Sigmoid colon (tissue), 7 donors: ENCODE measurements at regions of chr6 and their contacts with region 1.

Region 1: GRCh38 chr6:81752138-81752920 is at the start of gene TENT5A:
- DNase-seq: peak; percentile 98
- H3K4me3 ChIP-seq: peak within 1 kb of the TSS; percentile 81 to 94 (median 90)
- H3K27ac ChIP-seq: peak within 1 kb of the TSS; percentile 96 to 98 (median 98)
- H3K4me1 ChIP-seq: peaks cover 0 to 31% (median 22%) of the 10 kb centered on the region in 4 donors
- H3K27me3 ChIP-seq: no peaks in the 10 kb centered on the region
- CTCF ChIP-seq: no peak
- EP300 ChIP-seq: no peak
- POLR2A ChIP-seq: peak; percentile 78 to 93
- total RNA-seq, gene TENT5A: 13.4 to 29.3 (median 23.6) TPM

Region 2: GRCh38 chr6:80133020-80133419 is 1619.3 kb before region 1 on chr6:
- intact Hi-C with region 1: loop called (anchors 5 kb)
- DNase-seq: peak; percentile 83
- H3K4me3 ChIP-seq: no peak overlapping the region
- H3K27ac ChIP-seq: no peak overlapping the region
- H3K4me1 ChIP-seq: peaks cover 0 to 23% (median 7%) of the 10 kb centered on the region in 4 donors
- H3K27me3 ChIP-seq: no peaks in the 10 kb centered on the region
- CTCF ChIP-seq: peak; percentile 23 to 64 (median 48)
- EP300 ChIP-seq: no peak
- POLR2A ChIP-seq: no peak

Region 3: DNA sequence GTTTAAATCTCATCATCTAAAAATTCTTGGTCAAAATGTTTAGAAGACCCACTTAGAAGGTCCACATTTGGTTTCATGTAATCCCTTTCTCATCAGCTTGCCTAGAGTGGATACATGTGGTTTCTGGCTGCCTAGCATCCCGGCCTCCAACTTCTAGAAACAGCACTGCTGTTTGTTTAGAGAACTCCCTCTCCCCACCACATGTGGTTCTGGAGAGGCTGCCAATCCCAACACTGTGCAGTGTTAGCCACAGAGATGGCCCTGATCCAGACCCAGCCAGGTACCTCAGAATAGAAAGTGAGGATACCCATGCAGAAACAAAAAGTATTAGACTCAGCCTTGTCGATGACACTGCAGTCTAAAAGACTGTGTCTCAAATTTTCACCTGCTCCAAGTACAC is 1404.1 kb before region 1 on chr6:
- intact Hi-C with region 1: loop called (anchors 10 kb)
- DNase-seq: no peak
- H3K4me3 ChIP-seq: no peak overlapping the region
- H3K27ac ChIP-seq: no peak overlapping the region
- H3K4me1 ChIP-seq: no peaks in the 10 kb centered on the region
- H3K27me3 ChIP-seq: no peaks in the 10 kb centered on the region
- CTCF ChIP-seq: no peak
- EP300 ChIP-seq: no peak
- POLR2A ChIP-seq: no peak

Region 4: GRCh38 chr6:81172056-81172740 is 580.1 kb before region 1 on chr6:
- intact Hi-C with region 1: loop called (anchors 10 kb)
- DNase-seq: peak; percentile 69
- H3K4me3 ChIP-seq: no peak overlapping the region
- H3K27ac ChIP-seq: peak overlapping the region; percentile 4 to 66 (median 36)
- H3K4me1 ChIP-seq: peaks cover 0 to 45% (median 22%) of the 10 kb centered on the region in 4 donors
- H3K27me3 ChIP-seq: no peaks in the 10 kb centered on the region
- CTCF ChIP-seq: no peak
- EP300 ChIP-seq: no peak
- POLR2A ChIP-seq: no peak

Region 5: GRCh38 chr6:81465859-81466258 is 286.5 kb before region 1 on chr6:
- intact Hi-C with region 1: loop called (anchors 5 kb)
- DNase-seq: no peak
- H3K4me3 ChIP-seq: no peak overlapping the region
- H3K27ac ChIP-seq: no peak overlapping the region
- H3K4me1 ChIP-seq: no peaks in the 10 kb centered on the region
- H3K27me3 ChIP-seq: no peaks in the 10 kb centered on the region
- CTCF ChIP-seq: peak in 3 of 4 experiments; percentile 33 to 42 (median 37)
- EP300 ChIP-seq: no peak
- POLR2A ChIP-seq: no peak

Region 6: GRCh38 chr6:82040405-82041221 is 288.3 kb after region 1 on chr6:
- intact Hi-C with region 1: loop called (anchors 10 kb)
- DNase-seq: no peak
- H3K4me3 ChIP-seq: no peak overlapping the region
- H3K27ac ChIP-seq: no peak overlapping the region
- H3K4me1 ChIP-seq: no peaks in the 10 kb centered on the region
- H3K27me3 ChIP-seq: no peaks in the 10 kb centered on the region
- CTCF ChIP-seq: peak; percentile 15 to 68 (median 56)
- EP300 ChIP-seq: no peak
- POLR2A ChIP-seq: no peak